B cell (primary cell): ENCODE measurements at regions of chr2 and their contacts with region 1.

Region 1: DNA sequence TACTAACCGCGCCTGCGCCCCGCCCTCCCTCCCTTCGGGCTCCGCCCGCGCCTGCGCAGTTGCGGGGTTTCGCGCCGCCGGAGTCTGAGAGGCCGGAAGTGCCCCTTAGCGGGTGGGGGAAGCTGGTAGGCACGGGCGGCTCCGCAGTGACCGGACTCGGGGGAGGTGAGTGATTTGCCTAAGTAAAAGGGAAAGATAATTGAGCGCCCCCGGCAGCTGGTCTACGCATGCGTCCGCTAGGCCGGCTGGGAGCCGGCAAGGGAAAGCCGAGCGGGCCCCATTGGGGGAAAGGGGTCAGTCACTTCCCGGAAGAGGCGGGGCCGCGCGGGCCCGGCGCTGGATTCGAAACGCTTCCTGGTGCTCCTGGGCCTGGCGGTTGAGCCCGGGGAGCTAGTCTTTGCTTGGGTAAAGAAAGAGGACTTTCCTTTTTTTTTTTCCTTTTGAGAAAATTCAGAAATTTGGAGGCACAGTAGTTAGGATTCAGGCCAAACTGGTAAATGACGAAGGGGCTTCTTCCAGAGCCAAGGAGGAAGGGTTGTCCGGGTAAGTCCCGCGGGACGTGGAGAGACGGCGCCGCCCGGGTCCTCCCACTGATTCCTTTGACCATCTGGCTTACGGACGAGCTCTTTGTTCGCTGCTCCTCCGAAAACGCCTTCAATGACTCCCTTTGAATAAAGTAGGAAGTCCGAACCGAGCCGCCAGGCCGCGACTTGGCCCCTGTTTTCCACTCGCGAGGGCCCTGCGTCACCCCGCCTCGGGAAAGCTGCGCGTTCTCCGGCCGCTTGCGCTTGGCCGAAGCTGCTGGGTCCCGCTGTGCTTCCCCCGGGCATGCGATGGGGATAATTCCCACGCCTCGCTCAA is at the starts of genes GEN1 and SMC6:
- DNase-seq: peak; percentile 97
- ATAC-seq: peak; percentile 80
- H3K4me3 ChIP-seq: peak within 1 kb of the TSS; percentile 86 to 93 (median 92)
- H3K4me3 Mint-ChIP-seq: peak within 1 kb of the TSS; percentile 81
- H3K27ac ChIP-seq: peak within 1 kb of the TSS; percentile 94 to 96
- H3K27ac Mint-ChIP-seq: peak within 1 kb of the TSS; percentile 87
- H3K4me1 ChIP-seq: peaks cover 34 to 36% of the 10 kb centered on the region in 2 donors
- H3K4me1 Mint-ChIP-seq: peaks cover 52% of the 10 kb centered on the region
- H3K27me3 ChIP-seq: no peaks in the 10 kb centered on the region
- H3K27me3 Mint-ChIP-seq: no peaks in the 10 kb centered on the region
- CTCF ChIP-seq: no peak
- total RNA-seq, gene GEN1: 105 and 111 TPM in 2 replicates
- total RNA-seq, gene SMC6: 111 and 124 TPM in 2 replicates

Region 2: DNA sequence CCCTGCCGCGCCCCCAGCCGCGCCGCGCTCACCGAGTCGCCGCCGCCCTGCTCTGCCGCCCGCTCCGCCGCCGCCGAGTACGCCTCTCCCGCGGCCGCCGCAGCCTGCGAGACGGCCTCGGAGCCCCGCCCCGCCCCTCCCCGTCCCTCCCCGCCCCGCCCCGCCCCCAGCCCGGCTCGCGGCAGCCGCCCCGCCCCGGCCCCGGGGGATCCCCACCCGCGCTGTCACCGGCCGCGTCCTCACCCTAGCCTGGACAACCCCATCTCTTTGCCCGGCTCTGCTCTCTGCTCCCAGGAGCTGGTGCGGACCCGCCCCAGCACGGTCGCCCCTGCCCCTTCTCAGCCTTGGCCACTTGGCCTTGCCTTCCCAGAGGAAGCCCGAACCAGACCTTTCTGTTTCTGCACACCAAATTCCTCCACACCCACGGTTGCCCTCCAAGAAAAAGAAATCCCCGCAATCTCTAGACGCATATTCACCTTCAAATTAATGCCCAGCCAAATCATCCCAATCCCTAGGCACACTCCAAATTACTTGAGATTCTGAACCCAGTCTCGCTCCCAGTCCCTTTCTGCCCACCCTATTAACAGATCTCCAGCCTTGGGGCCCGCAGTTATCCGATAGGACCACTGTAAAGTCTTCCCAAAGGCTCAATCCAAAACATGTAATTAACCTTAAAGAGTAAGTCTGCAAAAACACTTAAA is 1088.1 kb before region 1 on chr2 and contains the start of gene CYRIA:
- CTCF ChIA-PET with region 1: no interaction called
- POLR2A ChIA-PET with region 1: no interaction called
- intact Hi-C with region 1: loop called (anchors 5 kb)
- DNase-seq: peak; percentile 82
- ATAC-seq: peak; percentile 71
- H3K4me3 ChIP-seq: peak within 1 kb of the TSS; percentile 55 to 97 (median 91)
- H3K4me3 Mint-ChIP-seq: peak within 1 kb of the TSS; percentile 92
- H3K27ac ChIP-seq: peak within 1 kb of the TSS; percentile 72 to 87
- H3K27ac Mint-ChIP-seq: peak within 1 kb of the TSS; percentile 95
- H3K4me1 ChIP-seq: peaks cover 43 to 53% of the 10 kb centered on the region in 2 donors
- H3K4me1 Mint-ChIP-seq: peaks cover 55% of the 10 kb centered on the region
- H3K27me3 ChIP-seq: no peaks in the 10 kb centered on the region
- H3K27me3 Mint-ChIP-seq: no peaks in the 10 kb centered on the region
- CTCF ChIP-seq: no peak
- total RNA-seq, gene CYRIA: 58.8 and 59.0 TPM in 2 replicates

Region 3: GRCh38 chr2:17199741-17200140 is 554.3 kb before region 1 on chr2:
- CTCF ChIA-PET with region 1: no interaction called
- POLR2A ChIA-PET with region 1: no interaction called
- intact Hi-C with region 1: loop called (anchors 5 kb)
- DNase-seq: no peak
- ATAC-seq: no peak
- H3K4me3 ChIP-seq: no peak overlapping the region
- H3K4me3 Mint-ChIP-seq: no peak overlapping the region
- H3K27ac ChIP-seq: no peak overlapping the region
- H3K27ac Mint-ChIP-seq: no peak overlapping the region
- H3K4me1 ChIP-seq: peaks cover 19 to 22% of the 10 kb centered on the region in 2 donors
- H3K4me1 Mint-ChIP-seq: peaks cover 32% of the 10 kb centered on the region
- H3K27me3 ChIP-seq: peaks cover 0 to 5% (median 0%) of the 10 kb centered on the region in 4 experiments
- H3K27me3 Mint-ChIP-seq: peaks cover 5% of the 10 kb centered on the region
- CTCF ChIP-seq: no peak

Region 4: GRCh38 chr2:17804358-17804757 is 50.3 kb after region 1 on chr2:
- CTCF ChIA-PET with region 1: interaction called, 10 read pairs
- POLR2A ChIA-PET with region 1: interaction called, 12 read pairs
- intact Hi-C with region 1: loop called (anchors 1 kb)
- DNase-seq: peak; percentile 78
- ATAC-seq: peak; percentile 83
- H3K4me3 ChIP-seq: peak overlapping the region in 2 of 5 experiments; percentile 31 to 34
- H3K4me3 Mint-ChIP-seq: peak overlapping the region; percentile 81
- H3K27ac ChIP-seq: peak overlapping the region; percentile 82 to 93
- H3K27ac Mint-ChIP-seq: peak overlapping the region; percentile 87
- H3K4me1 ChIP-seq: peaks cover 43 to 52% of the 10 kb centered on the region in 2 donors
- H3K4me1 Mint-ChIP-seq: peaks cover 70% of the 10 kb centered on the region
- H3K27me3 ChIP-seq: no peaks in the 10 kb centered on the region
- H3K27me3 Mint-ChIP-seq: no peaks in the 10 kb centered on the region
- CTCF ChIP-seq: no peak

Region 5: DNA sequence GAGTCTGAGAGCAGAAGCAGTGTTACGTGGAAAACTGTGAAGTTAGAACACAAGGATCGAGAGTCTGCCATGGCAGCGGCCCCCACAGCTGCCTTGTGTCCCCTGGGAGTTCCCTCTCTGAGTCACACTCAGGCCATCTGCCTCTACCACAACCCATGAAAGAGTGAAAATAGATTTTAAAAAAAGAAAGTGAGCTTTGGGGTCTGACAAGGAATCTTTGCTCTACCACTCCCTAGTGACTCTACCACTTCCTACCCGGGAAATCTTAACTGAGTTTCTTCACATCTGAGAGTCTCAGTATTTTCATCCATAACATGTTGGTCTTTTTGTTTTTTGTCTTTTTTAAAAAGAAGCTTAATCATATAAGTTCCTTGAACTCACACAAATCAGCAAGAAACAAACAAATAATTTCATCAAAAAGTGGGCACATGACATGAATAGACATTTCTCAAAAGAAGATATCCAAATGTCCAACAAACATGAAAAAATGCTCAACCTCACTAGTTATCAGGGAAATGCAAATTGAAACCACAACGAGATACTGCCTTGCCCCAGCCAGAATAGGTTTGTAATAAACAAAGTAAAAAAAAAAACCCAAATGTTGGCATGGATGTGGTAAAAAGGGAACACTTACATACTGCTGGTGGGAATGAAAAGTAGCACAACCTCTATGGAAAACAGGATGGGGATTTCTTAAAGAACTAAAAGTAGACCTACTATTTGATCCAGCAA is 59.9 kb after region 1 on chr2:
- CTCF ChIA-PET with region 1: interaction called, 8 read pairs
- POLR2A ChIA-PET with region 1: interaction called, 14 read pairs
- intact Hi-C with region 1: loop called (anchors 1 kb)
- DNase-seq: peak; percentile 74
- ATAC-seq: peak; percentile 80
- H3K4me3 ChIP-seq: peak overlapping the region in 1 of 5 experiments; percentile 27
- H3K4me3 Mint-ChIP-seq: peak overlapping the region; percentile 81
- H3K27ac ChIP-seq: peak overlapping the region; percentile 84 to 90
- H3K27ac Mint-ChIP-seq: peak overlapping the region; percentile 92
- H3K4me1 ChIP-seq: peaks cover 30 to 35% of the 10 kb centered on the region in 2 donors
- H3K4me1 Mint-ChIP-seq: peaks cover 60% of the 10 kb centered on the region
- H3K27me3 ChIP-seq: no peaks in the 10 kb centered on the region
- H3K27me3 Mint-ChIP-seq: no peaks in the 10 kb centered on the region
- CTCF ChIP-seq: no peak